ENCODE measurements at regions of chr11 and their contacts with region 1.

Region 1: GRCh38 chr11:2930704-2931428 is 1.6 kb upstream of the PHLDA2 start:
- DNase-seq: peak; percentile 83
- H3K4me3 Mint-ChIP-seq: peak overlapping the region; percentile 66
- H3K27ac Mint-ChIP-seq: peak overlapping the region; percentile 72
- H3K4me1 Mint-ChIP-seq: peaks cover 24% of the 10 kb centered on the region
- H3K27me3 Mint-ChIP-seq: peaks cover 20% of the 10 kb centered on the region

Region 2: DNA sequence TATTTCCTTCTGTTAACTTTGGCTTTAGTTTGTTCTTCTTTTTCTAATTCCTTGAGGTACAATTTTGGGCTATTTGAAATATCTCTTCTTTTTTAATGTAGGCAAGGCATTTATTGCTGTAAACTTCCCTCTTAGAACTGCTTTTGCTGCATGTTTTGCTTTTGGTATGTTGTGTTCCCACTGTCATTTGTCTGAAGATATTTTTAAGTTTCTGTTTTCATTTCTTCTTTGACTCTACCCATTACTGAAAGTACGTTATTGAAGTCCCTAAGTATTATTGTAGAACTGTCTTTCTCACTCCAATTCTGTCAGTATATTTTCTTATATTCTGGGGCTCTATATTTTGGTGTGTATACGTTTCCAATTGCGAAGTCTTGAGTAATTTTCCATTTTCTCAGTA is 309.0 kb before region 1 on chr11:
- CTCF ChIA-PET with region 1: no interaction called
- intact Hi-C with region 1: no loop called
- DNase-seq: no peak
- H3K4me3 Mint-ChIP-seq: no peak overlapping the region
- H3K27ac Mint-ChIP-seq: no peak overlapping the region
- H3K4me1 Mint-ChIP-seq: peaks cover 6% of the 10 kb centered on the region
- H3K27me3 Mint-ChIP-seq: no peaks in the 10 kb centered on the region

Region 3: GRCh38 chr11:2892215-2893020 is 38.4 kb before region 1 on chr11:
- CTCF ChIA-PET with region 1: interaction called, 18 read pairs
- intact Hi-C with region 1: loop called (anchors 1 kb)
- DNase-seq: peak; percentile 79
- H3K4me3 Mint-ChIP-seq: peak overlapping the region; percentile 84
- H3K27ac Mint-ChIP-seq: peak overlapping the region; percentile 80
- H3K4me1 Mint-ChIP-seq: peaks cover 16% of the 10 kb centered on the region
- H3K27me3 Mint-ChIP-seq: no peaks in the 10 kb centered on the region

Region 4: DNA sequence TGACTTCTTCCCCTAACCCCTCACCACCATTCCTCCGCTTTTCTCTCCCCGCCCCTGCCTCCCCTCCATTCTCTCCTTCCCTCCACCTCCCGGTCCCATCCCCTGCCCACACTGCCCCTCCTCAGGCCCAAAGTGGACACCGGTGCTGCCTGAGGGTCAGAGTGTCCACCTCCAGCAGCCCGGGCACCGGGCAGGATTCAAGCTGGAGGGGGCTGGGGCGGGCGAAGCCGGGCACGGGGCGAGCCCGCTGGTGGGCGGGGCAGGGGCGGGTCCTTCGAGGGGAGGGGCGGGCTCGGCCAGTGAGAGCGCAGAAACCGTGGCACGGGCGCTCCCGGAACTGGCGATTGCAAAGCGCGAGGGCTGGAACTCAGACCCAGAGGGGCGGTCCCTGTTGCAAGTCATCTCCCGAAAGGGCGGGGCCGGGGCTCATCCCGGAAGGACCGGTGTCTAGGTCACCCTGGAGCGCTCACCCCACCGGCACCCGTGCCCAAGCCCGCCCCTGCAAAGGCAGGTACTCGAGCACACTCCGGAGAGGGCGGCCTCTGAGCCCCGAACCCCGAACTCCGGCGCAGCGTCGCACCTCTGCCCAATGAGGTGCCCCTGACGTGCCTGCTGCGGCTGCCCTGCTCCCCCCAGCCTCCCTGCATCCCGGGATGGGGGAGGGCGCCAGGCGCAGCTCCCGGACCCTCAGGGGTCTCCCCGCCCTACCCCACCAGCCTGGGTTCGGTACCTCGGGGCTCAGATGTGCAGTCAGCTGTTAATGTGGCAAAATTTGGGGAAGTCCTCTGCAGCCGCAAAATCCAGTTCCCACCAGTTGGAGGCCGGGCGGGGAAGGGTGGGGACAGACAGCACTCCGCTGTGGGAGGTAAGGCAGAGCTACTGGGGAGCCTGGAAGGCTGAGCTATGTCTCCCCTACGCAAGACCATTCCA is 28.7 kb before region 1 on chr11:
- CTCF ChIA-PET with region 1: interaction called, 4 read pairs
- intact Hi-C with region 1: loop called (anchors 1 kb)
- DNase-seq: peak; percentile 98
- H3K4me3 Mint-ChIP-seq: peak overlapping the region; percentile 72
- H3K27ac Mint-ChIP-seq: peak overlapping the region; percentile 41
- H3K4me1 Mint-ChIP-seq: peaks cover 33% of the 10 kb centered on the region
- H3K27me3 Mint-ChIP-seq: no peaks in the 10 kb centered on the region

Measured in activated naive CD4-positive, alpha-beta T cell treated with anti-CD3 and anti-CD28 coated beads for 36 hours (primary cell).